ENCODE measurements at regions of chr3 and their contacts with region 1.

Region 1: GRCh38 chr3:11638495-11639358 is 5.0 kb downstream of the VGLL4 start:
- DNase-seq: no peak
- ATAC-seq: no peak

Region 2: DNA sequence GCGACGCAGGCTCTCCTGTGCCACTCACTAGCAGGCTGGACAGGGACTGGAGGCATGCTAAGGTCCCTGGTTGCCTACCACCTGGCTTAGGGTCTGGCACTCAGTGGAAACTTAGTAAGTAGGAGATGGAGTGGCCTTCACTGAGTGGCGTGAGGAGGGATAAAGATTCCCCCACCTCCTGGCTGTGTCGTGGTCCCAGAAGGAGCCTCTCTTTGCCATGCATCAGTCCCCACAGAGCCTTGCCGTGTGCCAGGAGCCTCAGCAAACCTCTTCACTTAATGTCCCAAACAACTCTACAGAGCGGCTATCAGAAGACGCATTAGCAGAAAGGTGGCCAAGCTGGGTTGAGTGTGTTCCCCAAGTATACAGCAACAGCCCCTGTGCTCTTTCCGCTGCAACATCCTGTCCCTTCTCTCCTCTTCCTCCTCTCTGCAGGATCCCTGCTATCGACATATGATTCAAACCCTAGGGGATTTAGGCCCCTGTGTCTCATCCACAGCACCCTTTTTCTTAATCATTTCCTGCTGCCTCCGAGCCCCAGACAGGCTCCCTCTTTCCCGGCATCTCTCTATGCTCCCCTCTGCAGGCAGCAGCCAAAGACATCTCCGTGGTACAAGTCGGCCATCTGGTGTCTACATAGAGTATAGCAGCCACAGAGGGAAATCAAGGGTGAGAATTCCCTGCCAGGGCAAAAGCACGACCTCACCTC is 579.5 kb before region 1 on chr3:
- intact Hi-C with region 1: no loop called
- DNase-seq: peak in 1 of 2 donors; percentile 41
- ATAC-seq: peak; percentile 87

Region 3: DNA sequence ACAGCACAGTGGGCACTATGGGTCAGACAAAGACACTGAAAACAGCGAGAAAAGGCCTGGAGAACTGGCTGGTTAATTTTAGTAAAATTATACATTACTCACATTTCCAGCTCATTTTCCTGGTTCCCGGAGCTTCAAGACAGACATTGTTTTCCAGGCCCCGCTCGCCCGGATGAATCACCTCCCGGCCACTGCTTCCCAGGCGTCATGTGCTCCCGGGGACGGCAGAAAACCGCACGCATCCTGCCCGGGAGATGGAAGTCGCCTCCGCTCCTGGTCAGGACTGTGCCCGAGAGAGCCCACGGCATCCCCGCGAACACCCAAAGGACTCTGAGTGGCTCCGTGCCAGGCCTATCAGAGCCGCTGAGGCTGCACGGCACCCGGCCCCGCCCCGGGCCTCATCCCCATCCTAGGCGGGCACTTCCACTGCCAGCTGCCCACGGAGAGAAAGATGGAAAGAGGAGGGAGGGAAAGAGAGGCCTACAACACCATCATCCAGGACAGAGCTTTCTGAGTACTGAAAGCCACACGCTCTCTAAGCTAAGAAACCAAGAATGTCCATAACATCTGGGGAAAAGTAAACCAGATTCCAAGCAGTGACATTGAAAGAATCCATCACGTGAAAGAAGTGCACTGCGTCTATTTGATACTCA is 70.1 kb before region 1 on chr3:
- intact Hi-C with region 1: loop called in 1 of 2 experiments (anchors 10 kb)
- DNase-seq: peak in 1 of 2 donors; percentile 35
- ATAC-seq: peak; percentile 19

Measured in left colon (tissue), 2 donors.